Endothelial cell of umbilical vein (primary cell): ENCODE measurements at regions of chr14 and their contacts with region 1.

Region 1: GRCh38 chr14:22084393-22085281 is 411.0 kb upstream of the OR4E1 start:
- DNase-seq: peak; percentile 67
- H3K4me3 ChIP-seq: no peak overlapping the region
- H3K27ac ChIP-seq: no peak overlapping the region
- H3K4me1 ChIP-seq: peaks cover 4% of the 10 kb centered on the region
- H3K27me3 ChIP-seq: peaks cover 0 to under 1% of the 10 kb centered on the region in 2 experiments
- CTCF ChIP-seq: peak; percentile 47 to 60
- POLR2A ChIP-seq: no peak

Region 2: GRCh38 chr14:22065347-22065746 is 19.3 kb before region 1 on chr14:
- CTCF ChIA-PET with region 1: interaction called, 11 read pairs
- POLR2A ChIA-PET with region 1: no interaction called
- dilution Hi-C with region 1: no loop called
- intact Hi-C with region 1: no loop called
- DNase-seq: no peak
- H3K4me3 ChIP-seq: no peak overlapping the region
- H3K27ac ChIP-seq: no peak overlapping the region
- H3K4me1 ChIP-seq: peaks cover 10% of the 10 kb centered on the region
- H3K27me3 ChIP-seq: peaks cover 3 to 4% of the 10 kb centered on the region in 2 experiments
- CTCF ChIP-seq: no peak
- POLR2A ChIP-seq: no peak

Region 3: GRCh38 chr14:22073801-22074200 is 10.8 kb before region 1 on chr14:
- CTCF ChIA-PET with region 1: interaction called, 15 read pairs
- POLR2A ChIA-PET with region 1: no interaction called
- dilution Hi-C with region 1: no loop called
- intact Hi-C with region 1: no loop called
- DNase-seq: no peak
- H3K4me3 ChIP-seq: no peak overlapping the region
- H3K27ac ChIP-seq: no peak overlapping the region
- H3K4me1 ChIP-seq: peaks cover 7% of the 10 kb centered on the region
- H3K27me3 ChIP-seq: no peaks in the 10 kb centered on the region
- CTCF ChIP-seq: no peak
- POLR2A ChIP-seq: no peak